Activated CD4-positive, alpha-beta T cell treated with anti-CD3 and anti-CD28 coated beads for 36 hours (primary cell): ENCODE measurements at regions of chrX and their contacts with region 1.

Region 1: DNA sequence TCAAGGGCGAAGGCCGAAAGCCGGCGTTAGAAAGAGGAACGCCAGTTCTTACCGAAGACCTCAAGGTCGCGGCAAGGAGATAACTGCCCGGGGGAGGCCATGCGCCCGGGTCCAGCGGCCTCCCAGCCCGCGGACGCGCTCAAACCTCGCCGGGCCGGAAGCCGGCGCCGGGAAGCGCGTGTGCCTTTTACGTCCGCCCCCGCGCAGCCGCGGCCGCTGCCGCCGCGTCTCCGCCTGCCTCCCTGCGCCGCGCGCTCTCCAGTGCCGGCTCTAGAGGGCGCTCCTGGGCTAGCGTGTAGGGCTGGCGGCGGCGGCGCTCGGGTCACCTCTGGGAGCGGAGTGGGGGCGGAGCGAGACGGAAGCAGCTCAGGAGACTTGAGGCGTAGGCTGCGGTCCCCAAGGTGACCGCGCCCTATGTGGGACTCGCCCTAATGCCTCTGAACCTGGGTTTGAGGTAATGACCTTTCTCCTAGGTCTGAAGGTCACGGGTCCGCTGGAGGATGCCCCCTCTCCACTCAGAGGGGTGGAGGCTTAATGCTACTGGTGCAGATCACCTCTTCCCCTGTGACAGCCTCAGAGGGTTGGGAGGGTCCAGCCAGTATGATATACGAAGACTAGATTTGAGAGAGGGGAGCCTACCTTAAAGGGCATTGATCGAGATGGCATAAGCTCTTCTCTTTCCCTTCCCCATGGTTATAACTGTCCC is 839 bp downstream of the SLC25A5 start:
- DNase-seq: peak; percentile 94
- ATAC-seq: peak; percentile 78
- H3K4me3 Mint-ChIP-seq: peak overlapping the region; percentile 85
- H3K27ac Mint-ChIP-seq: peak overlapping the region; percentile 86
- H3K4me1 Mint-ChIP-seq: peaks cover 12% of the 10 kb centered on the region
- H3K27me3 Mint-ChIP-seq: no peaks in the 10 kb centered on the region

Region 2: DNA sequence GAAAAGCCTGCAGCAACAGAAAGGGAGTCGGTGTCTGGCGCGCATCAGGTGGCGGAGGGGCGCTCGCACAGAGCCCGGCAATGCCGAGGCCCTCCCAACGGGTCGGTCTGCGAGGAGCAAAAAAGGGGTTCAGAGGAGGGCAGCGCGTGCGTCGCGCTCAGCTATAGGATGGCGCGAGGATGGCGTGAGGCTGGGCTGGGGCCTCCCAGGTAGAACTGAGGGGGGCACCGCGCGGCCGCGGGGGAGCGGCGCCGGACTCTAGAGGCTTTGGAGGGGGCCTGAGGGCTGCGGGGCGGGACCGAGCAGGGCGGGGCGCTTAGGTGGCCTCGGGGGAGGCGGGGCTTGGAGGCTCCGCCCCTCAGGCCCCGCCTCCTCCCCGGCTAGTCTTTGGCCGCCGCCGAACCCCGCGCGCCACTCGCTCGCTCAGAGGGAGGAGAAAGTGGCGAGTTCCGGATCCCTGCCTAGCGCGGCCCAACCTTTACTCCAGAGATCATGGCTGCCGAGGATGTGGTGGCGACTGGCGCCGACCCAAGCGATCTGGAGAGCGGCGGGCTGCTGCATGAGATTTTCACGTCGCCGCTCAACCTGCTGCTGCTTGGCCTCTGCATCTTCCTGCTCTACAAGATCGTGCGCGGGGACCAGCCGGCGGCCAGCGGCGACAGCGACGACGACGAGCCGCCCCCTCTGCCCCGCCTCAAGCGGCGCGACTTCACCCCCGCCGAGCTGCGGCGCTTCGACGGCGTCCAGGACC is 233.0 kb before region 1 on chrX and contains the start of gene PGRMC1:
- CTCF ChIA-PET with region 1: no interaction called
- POLR2A ChIA-PET with region 1: no interaction called
- intact Hi-C with region 1: loop called in 1 of 2 experiments (anchors 1 kb)
- DNase-seq: peak; percentile 86
- ATAC-seq: peak; percentile 94
- H3K4me3 Mint-ChIP-seq: peak within 1 kb of the TSS; percentile 89
- H3K27ac Mint-ChIP-seq: peak within 1 kb of the TSS; percentile 86
- H3K4me1 Mint-ChIP-seq: peaks cover 27% of the 10 kb centered on the region
- H3K27me3 Mint-ChIP-seq: peaks cover 3% of the 10 kb centered on the region
- total RNA-seq, gene PGRMC1: 30.8 to 37.3 TPM

Region 3: DNA sequence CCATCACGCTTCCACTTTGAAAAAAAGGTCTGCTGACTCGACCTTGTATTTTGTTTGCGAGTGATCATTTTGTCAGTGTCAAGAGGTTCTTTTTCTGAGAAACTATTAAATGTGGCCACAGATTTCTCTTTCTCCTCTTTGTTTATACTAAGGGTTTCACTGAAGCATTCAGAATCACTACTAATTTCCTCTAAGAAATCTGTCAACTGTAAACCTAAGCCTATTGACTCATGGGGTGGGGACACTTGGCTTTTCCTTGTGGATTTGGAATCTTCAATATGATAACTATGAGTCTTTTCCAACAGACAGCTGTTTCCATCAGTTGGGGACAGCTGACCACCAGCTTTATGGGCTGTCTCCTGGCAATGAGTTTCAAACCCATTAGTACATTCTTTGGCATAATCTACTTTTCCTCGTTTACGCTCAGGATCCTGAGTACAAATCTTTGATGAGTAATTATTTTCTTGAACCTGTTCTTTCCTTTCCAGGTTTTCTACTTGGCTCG is 219.2 kb before region 1 on chrX:
- CTCF ChIA-PET with region 1: no interaction called
- POLR2A ChIA-PET with region 1: no interaction called
- intact Hi-C with region 1: no loop called
- DNase-seq: no peak
- ATAC-seq: no peak
- H3K4me3 Mint-ChIP-seq: no peak overlapping the region
- H3K27ac Mint-ChIP-seq: no peak overlapping the region
- H3K4me1 Mint-ChIP-seq: peaks cover 6% of the 10 kb centered on the region
- H3K27me3 Mint-ChIP-seq: no peaks in the 10 kb centered on the region

Region 4: DNA sequence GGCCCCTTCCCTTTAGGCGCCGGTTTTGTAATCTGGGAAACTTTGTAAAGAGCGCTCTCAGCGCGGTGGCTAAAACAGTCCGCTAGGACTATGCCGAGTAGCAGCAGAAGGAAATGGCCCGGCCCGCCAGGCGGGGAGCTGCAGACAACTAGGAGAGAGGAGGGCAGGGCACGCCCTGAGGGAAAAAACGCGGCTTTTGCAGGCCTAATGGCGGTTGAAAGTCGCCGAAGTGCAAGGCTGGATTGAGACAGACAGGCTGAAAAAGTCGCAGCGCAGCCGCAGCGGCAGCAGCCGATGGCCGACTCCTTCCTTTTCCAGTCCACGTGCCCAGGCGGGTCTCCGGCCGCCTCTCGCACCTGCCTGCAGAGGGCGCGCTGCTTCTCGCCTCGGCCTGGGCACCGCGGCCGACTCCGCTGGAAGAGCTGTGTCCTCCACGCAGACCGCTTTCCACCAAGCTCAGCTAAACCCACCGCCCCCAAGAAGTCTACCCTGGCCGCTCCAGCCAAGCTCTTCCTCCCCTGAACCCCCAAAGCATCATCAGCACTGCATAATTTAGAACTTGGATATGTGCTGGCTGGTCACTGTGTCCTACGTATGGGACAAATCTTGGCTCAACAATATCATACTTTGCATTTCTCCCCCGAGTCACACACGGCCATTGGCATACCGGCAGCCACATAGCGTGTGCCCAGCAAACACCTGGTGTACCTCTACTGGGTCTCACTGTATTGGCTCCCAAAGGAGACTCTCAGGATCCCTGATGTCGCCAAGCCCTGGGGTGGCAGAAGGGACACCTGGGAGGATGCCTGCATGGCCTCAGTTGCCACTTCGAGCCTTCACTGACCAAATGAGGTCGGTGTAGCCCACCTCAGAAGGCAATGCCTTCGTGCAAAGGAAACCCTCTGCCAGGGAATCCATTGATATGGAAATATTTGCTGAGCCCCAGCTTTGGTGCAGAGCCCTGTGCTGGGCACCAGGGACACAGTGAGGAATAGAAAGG is 13.7 kb after region 1 on chrX:
- CTCF ChIA-PET with region 1: interaction called, 9 read pairs
- POLR2A ChIA-PET with region 1: interaction called, 3 read pairs
- intact Hi-C with region 1: loop called (anchors 1 to 2 kb)
- DNase-seq: peak; percentile 82
- ATAC-seq: peak; percentile 93
- H3K4me3 Mint-ChIP-seq: peak overlapping the region; percentile 55
- H3K27ac Mint-ChIP-seq: peak overlapping the region; percentile 19
- H3K4me1 Mint-ChIP-seq: peaks cover 7% of the 10 kb centered on the region
- H3K27me3 Mint-ChIP-seq: no peaks in the 10 kb centered on the region

Region 5: GRCh38 chrX:119574394-119575266 is 105.5 kb after region 1 on chrX and contains the start of gene UBE2A:
- CTCF ChIA-PET with region 1: no interaction called
- POLR2A ChIA-PET with region 1: no interaction called
- intact Hi-C with region 1: loop called (anchors 1 to 2 kb)
- DNase-seq: peak; percentile 92
- ATAC-seq: peak; percentile 92
- H3K4me3 Mint-ChIP-seq: peak within 1 kb of the TSS; percentile 94
- H3K27ac Mint-ChIP-seq: peak within 1 kb of the TSS; percentile 87
- H3K4me1 Mint-ChIP-seq: peaks cover 24% of the 10 kb centered on the region
- H3K27me3 Mint-ChIP-seq: no peaks in the 10 kb centered on the region
- total RNA-seq, gene UBE2A: 49.2 to 67.9 TPM

Region 6: GRCh38 chrX:119871599-119872395 is 402.7 kb after region 1 on chrX and contains the starts of genes NDUFA1 and RNF113A:
- CTCF ChIA-PET with region 1: no interaction called
- POLR2A ChIA-PET with region 1: no interaction called
- intact Hi-C with region 1: loop called in 1 of 2 experiments (anchors 1 kb)
- DNase-seq: peak; percentile 91
- ATAC-seq: peak; percentile 93
- H3K4me3 Mint-ChIP-seq: peak within 1 kb of the TSS; percentile 100
- H3K27ac Mint-ChIP-seq: peak within 1 kb of the TSS; percentile 99
- H3K4me1 Mint-ChIP-seq: peaks cover 14% of the 10 kb centered on the region
- H3K27me3 Mint-ChIP-seq: no peaks in the 10 kb centered on the region
- total RNA-seq, gene NDUFA1: 37.6 to 101 TPM
- total RNA-seq, gene RNF113A: 26.9 to 29.9 TPM